Psoas muscle (tissue), 8 donors: ENCODE measurements at regions of chr2 and their contacts with region 1.

Region 1: GRCh38 chr2:213187833-213188532 is 36.6 kb upstream of the IKZF2 start:
- DNase-seq: no peak
- ATAC-seq: no peak
- H3K4me3 ChIP-seq: no peak overlapping the region
- H3K27ac ChIP-seq: no peak overlapping the region
- H3K4me1 ChIP-seq: no peaks in the 10 kb centered on the region
- H3K27me3 ChIP-seq: no peaks in the 10 kb centered on the region
- CTCF ChIP-seq: no peak

Region 2: GRCh38 chr2:213205944-213206343 is 18.0 kb after region 1 on chr2:
- intact Hi-C with region 1: loop called in 1 of 2 experiments (anchors 1 kb)
- DNase-seq: no peak
- ATAC-seq: no peak
- H3K4me3 ChIP-seq: no peak overlapping the region
- H3K27ac ChIP-seq: no peak overlapping the region
- H3K4me1 ChIP-seq: no peaks in the 10 kb centered on the region
- H3K27me3 ChIP-seq: no peaks in the 10 kb centered on the region
- CTCF ChIP-seq: no peak

Region 3: DNA sequence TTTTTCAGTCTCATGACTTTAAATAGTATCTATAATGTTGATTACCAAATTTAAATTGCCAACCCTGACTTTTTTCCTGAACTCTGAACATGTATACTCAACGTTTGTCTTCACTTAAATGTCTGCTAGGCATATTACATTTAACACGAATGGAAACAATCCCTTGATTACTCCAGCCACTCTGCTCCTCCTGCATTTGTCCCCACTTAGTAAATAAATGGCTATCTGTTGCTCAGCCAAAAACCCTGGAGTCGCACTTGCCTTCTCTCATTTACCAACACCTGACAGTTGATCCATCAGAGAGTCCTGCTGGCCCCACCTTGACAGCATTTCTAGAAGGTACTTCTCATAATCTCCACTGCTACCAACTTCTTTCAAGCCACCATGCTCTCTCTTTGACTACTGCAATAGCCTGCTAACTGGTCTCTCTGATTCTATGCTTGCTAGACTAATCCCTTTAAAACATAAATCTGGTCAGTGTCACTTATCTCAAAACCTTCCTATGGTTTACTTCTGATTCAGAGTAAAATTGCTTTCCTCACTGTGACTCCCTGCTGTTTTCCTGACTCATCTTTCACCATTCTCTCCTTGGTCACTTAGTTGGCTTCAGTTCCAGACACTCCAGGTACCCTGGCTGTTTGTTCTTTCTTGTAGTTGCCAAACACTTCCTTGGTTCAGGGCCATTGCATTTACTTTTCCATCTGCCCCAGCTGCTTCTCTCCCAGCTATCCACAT is 128.2 kb after region 1 on chr2:
- intact Hi-C with region 1: no loop called
- DNase-seq: no peak
- ATAC-seq: no peak
- H3K4me3 ChIP-seq: no peak overlapping the region
- H3K27ac ChIP-seq: no peak overlapping the region
- H3K4me1 ChIP-seq: no peaks in the 10 kb centered on the region
- H3K27me3 ChIP-seq: no peaks in the 10 kb centered on the region
- CTCF ChIP-seq: no peak

Region 4: DNA sequence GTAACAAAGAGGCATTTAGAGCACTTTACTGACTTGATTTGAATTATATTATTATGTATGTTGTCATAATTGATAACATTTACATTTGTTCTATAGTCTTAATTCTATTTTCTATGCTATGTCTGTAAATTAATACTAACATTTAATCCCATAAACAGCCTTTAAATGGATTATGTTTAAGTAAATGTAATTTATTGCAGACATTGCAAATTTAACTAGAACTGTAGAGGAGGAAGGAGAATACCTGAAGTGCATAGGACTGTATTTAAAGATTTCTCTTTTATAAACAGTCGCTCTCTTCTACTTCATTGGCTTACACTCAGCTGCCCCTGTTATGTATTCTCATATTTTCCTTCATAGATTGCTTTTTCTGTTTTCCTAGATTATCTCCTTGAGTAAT is 188.7 kb after region 1 on chr2:
- intact Hi-C with region 1: no loop called
- DNase-seq: no peak
- ATAC-seq: no peak
- H3K4me3 ChIP-seq: no peak overlapping the region
- H3K27ac ChIP-seq: no peak overlapping the region
- H3K4me1 ChIP-seq: no peaks in the 10 kb centered on the region
- H3K27me3 ChIP-seq: no peaks in the 10 kb centered on the region
- CTCF ChIP-seq: no peak